ENCODE measurements at regions of chr17 and their contacts with region 1.

Region 1: DNA sequence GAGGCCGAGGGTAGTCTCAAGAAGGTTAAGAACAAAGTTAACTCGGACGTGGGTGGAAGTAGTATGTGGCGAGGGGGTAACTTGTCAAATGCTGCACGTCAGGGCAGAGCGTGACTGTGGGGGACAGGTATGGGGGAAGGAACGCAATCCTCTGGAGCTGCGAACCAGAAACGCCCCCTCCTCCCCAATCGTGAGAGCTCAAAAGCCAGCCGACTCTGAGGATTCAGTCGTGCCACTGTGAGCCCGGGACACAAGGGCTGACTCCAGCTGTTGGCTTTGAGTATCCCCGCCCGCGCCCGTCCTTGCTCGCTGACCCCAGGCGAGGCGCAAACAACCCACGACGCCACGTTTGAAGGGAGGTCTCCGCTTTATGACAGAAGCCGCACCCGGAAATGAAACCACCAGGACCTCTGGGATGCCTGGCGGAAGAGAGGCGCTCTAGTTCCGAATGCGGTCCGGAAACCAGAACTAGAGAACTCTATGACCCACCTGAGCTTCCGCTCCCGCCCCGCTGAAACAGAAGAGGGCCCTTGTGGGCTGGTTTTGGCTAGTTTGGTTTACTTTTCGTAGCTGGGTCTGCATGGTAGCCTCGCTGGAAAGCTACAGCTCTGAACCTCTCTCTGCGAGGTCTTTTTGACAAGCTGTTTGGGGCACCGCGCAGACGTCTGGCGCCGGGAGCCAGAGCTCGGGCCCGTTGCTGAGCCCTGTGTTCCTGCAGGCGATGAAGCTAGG is at the start of gene PEX12:
- DNase-seq: peak; percentile 88
- H3K4me3 ChIP-seq: peak within 1 kb of the TSS; percentile 57 to 58
- H3K27ac ChIP-seq: peak within 1 kb of the TSS; percentile 73 to 79
- H3K4me1 ChIP-seq: no peaks in the 10 kb centered on the region
- H3K27me3 ChIP-seq: no peaks in the 10 kb centered on the region
- CTCF ChIP-seq: peak in 2 of 4 experiments; percentile 11 to 35
- POLR2A ChIP-seq: peak; percentile 57
- total RNA-seq, gene PEX12: 9.4 to 11.6 TPM

Region 2: GRCh38 chr17:34254651-34255380 is 1323.5 kb before region 1 on chr17 and contains the start of gene CCL2:
- intact Hi-C with region 1: loop called (anchors 5 kb)
- DNase-seq: peak; percentile 73
- H3K4me3 ChIP-seq: peak within 1 kb of the TSS; percentile 19 to 25
- H3K27ac ChIP-seq: peak within 1 kb of the TSS; percentile 69 to 73
- H3K4me1 ChIP-seq: peaks cover 13% of the 10 kb centered on the region
- H3K27me3 ChIP-seq: no peaks in the 10 kb centered on the region
- CTCF ChIP-seq: no peak
- POLR2A ChIP-seq: peak; percentile 44
- total RNA-seq, gene CCL2: 30.2 to 41.8 TPM

Region 3: GRCh38 chr17:35519439-35519838 is 58.9 kb before region 1 on chr17:
- intact Hi-C with region 1: no loop called
- DNase-seq: no peak
- H3K4me3 ChIP-seq: no peak overlapping the region
- H3K27ac ChIP-seq: no peak overlapping the region
- H3K4me1 ChIP-seq: no peaks in the 10 kb centered on the region
- H3K27me3 ChIP-seq: peaks cover 3% of the 10 kb centered on the region
- CTCF ChIP-seq: no peak
- POLR2A ChIP-seq: no peak

Measured in prostate gland (tissue), 2 donors.